ENCODE measurements at regions of chr3 and their contacts with region 1.

Region 1: GRCh38 chr3:120039642-120040610 is 54.3 kb downstream of the GSK3B start:
- DNase-seq: no peak
- ATAC-seq: peak in 2 of 8 donors; percentile 14 to 19
- H3K4me3 ChIP-seq: no peak overlapping the region
- H3K27ac ChIP-seq: no peak overlapping the region
- H3K4me1 ChIP-seq: peaks cover 0 to 37% (median 12%) of the 10 kb centered on the region in 9 donors
- H3K27me3 ChIP-seq: no peaks in the 10 kb centered on the region
- CTCF ChIP-seq: peak in 1 of 9 donors; percentile 12

Region 2: DNA sequence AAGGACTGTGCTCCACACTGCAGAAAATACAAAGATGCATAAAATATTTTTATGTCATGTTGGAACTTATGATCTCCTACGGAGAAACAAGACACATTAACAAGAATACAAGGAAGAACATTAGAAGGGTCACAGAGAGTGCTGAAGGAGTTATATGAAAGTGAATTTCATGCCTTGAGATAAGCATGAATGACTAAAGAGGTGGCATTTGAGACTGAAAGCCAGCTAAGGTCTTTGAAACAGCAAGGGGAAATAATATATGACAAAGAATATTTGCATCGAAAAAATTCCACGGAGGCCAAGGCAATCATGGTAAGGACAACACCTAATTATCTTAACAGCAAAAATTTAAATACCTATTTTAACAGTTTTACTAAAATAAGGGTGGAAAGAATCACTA is 41.8 kb after region 1 on chr3:
- intact Hi-C with region 1: loop called in 1 of 10 experiments (anchors 10 kb)
- DNase-seq: no peak
- ATAC-seq: no peak
- H3K4me3 ChIP-seq: no peak overlapping the region
- H3K27ac ChIP-seq: no peak overlapping the region
- H3K4me1 ChIP-seq: peaks cover 0 to 89% (median 40%) of the 10 kb centered on the region in 9 donors
- H3K27me3 ChIP-seq: no peaks in the 10 kb centered on the region
- CTCF ChIP-seq: no peak

Region 3: DNA sequence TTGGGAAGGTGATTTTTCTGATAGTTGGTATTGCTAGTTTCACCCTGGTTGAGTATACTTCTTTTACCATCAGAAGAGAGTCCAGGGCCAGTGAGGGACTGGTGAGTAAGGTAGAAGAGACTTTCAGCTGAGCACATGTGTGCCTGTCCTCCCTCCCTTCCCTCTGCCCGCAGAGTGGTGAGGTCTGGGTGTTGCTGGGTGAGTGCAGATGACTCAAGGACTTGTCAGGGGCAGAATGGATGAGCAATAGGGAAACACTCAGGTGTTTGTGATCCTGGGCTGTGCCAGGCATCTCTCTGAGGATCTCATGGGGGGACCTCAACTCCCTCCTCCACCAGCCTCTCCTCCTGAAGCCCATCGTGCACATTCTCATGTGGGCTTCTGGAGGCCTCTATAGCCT is 130.3 kb after region 1 on chr3:
- intact Hi-C with region 1: no loop called
- DNase-seq: no peak
- ATAC-seq: no peak
- H3K4me3 ChIP-seq: no peak overlapping the region
- H3K27ac ChIP-seq: no peak overlapping the region
- H3K4me1 ChIP-seq: peaks cover 0 to 7% (median 0%) of the 10 kb centered on the region in 9 donors
- H3K27me3 ChIP-seq: no peaks in the 10 kb centered on the region
- CTCF ChIP-seq: no peak